ENCODE measurements at regions of chr19 and their contacts with region 1.

Region 1: DNA sequence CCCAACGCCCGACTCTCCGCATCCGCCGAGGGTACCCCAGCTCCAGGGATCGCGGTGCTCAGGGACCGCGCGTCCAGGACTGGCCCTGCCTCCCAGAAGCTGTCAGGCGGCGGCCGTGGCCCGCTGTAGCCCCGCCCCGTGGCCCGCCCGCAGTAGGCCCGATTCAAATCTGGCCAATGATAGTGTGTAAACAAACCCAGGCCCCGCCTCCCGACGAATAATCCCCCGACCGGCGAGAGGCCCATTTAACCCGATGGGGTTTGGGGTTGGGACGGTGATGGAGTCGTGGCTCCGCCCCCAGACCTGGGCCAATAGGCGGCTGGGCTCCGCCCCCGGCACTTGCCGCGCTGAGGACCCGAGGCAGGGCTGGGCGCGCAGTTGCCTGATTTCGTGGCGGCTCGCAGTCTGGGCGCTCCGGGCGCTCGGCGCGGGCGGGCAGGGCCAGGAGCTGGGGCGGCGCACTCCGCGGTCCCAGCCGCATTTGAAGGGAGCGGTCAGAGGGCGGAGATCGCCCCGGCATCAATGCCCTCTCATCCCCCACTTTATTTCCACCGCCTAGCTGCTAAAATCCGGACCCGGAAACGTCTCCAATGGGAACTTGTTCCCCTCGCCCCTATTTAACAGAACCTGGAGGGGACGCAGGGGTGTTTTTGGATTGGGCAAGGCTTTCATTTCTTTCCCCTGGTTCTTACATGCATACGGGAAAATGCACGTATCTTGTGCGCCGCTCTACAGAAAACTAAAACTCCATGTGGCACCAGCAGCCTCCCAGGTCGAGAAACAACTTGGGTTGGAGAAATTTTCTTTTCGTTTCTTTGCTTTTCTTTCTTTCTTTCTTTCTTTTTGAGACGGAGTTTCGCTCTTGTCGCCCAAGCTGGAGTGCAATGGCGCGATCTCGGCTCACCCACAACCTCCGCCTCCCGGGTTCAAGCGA is 8.4 kb upstream of the BICRA start:
- DNase-seq: peak; percentile 96 to 99 (median 98)
- H3K4me3 ChIP-seq: peak overlapping the region; percentile 49 to 67
- H3K4me3 Mint-ChIP-seq: peak overlapping the region; percentile 85 to 90 (median 86)
- H3K27ac ChIP-seq: peak overlapping the region; percentile 74
- H3K27ac Mint-ChIP-seq: peak overlapping the region; percentile 80 to 94 (median 90)
- H3K4me1 ChIP-seq: peaks cover 19% of the 10 kb centered on the region
- H3K4me1 Mint-ChIP-seq: peaks cover 6 to 40% (median 20%) of the 10 kb centered on the region in 4 donors
- H3K27me3 ChIP-seq: no peaks in the 10 kb centered on the region
- H3K27me3 Mint-ChIP-seq: no peaks in the 10 kb centered on the region

Region 2: DNA sequence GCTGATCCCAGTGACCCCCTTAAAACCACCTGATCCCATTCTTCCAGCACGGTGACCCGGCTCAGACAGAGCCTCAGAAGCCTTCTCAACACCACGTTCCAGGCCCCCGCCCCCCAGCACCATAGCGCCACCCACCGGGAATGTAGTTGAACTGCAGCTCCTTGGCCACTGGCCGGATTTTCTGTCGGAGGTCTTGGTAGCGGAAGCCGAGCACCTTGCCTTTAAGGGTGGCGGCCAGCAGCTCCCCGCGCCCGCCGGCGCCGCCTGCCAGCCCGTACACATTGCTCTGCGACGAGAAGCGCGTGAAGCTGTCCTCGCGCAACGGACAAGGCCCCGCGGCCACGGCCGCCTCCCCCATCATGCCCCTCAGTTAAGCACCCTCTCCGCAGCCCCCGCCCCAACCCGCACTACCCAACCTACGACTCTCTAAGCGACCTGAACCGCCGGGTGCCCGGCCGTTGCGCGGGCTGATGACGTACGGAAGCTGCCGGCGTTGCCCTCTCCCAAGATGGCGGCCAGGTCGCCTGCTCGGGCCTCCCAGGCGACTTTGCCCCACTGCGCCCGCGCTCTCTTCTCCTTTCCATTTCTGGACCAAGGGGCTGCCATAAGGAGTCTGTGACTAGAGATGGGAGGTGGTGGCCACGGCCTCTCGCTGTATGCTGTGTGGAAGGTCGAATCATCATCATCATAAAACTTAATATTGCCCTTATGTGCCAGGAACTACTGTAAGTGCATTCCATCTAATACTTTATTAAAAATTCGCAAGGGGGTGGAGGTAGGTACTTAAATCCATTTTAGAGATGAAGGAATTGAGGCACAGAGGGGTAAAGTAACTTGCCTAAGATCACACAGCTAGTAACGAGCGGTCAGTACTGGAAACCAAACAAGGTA is 116.5 kb before region 1 on chr19 and contains the start of gene KPTN:
- CTCF ChIA-PET with region 1: no interaction called
- POLR2A ChIA-PET with region 1: interaction called, 10 read pairs
- intact Hi-C with region 1: loop called (anchors 1 kb)
- DNase-seq: peak; percentile 87 to 92 (median 90)
- H3K4me3 ChIP-seq: peak within 1 kb of the TSS; percentile 44 to 72
- H3K4me3 Mint-ChIP-seq: peak within 1 kb of the TSS; percentile 91 to 100 (median 98)
- H3K27ac ChIP-seq: peak within 1 kb of the TSS; percentile 86
- H3K27ac Mint-ChIP-seq: peak within 1 kb of the TSS; percentile 96 to 100 (median 99)
- H3K4me1 ChIP-seq: peaks cover 21% of the 10 kb centered on the region
- H3K4me1 Mint-ChIP-seq: peaks cover 16 to 42% (median 22%) of the 10 kb centered on the region in 4 donors
- H3K27me3 ChIP-seq: no peaks in the 10 kb centered on the region
- H3K27me3 Mint-ChIP-seq: no peaks in the 10 kb centered on the region
- total RNA-seq, gene KPTN: 4.0 to 4.3 TPM

Region 3: DNA sequence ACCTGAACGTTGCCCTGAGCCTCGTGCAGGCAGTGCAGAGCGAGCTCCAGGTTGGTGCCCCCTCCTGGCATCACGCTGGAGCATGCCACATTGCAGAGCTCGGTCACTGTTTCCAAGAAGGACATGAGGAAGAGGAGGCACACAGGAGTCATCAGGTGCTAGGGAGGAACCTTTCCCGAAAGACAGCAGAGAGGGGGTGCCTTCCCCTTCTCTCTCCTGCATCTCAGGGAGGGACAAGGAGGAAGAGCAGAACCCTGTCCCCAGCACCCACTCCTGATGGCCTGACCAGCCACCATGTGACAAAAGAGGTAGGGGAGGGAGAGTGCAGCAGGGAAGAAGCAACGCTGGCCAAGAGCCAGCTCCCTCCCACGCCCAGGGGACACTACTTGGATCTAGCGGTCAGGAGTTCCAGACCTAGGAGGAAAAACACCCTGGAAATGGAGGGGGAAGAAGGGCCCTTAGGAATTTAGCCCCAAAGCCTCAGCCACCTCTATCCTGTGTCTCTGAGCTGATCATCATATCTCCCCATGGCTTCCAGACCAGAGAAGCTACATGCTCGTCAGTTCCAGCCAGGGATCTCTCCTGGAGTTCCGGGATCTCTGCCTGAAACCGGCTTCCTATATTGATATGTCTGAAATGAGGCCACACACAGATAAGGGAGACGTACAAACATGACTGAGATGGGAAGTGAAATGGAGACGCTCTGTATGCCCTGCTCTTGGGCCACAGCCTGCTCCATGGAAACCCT is 68.7 kb before region 1 on chr19:
- CTCF ChIA-PET with region 1: no interaction called
- POLR2A ChIA-PET with region 1: no interaction called
- intact Hi-C with region 1: no loop called
- DNase-seq: no peak
- H3K4me3 ChIP-seq: no peak overlapping the region
- H3K4me3 Mint-ChIP-seq: no peak overlapping the region
- H3K27ac ChIP-seq: no peak overlapping the region
- H3K27ac Mint-ChIP-seq: no peak overlapping the region
- H3K4me1 ChIP-seq: no peaks in the 10 kb centered on the region
- H3K4me1 Mint-ChIP-seq: peaks cover 0 to 4% (median 0%) of the 10 kb centered on the region in 4 donors
- H3K27me3 ChIP-seq: no peaks in the 10 kb centered on the region
- H3K27me3 Mint-ChIP-seq: no peaks in the 10 kb centered on the region

Region 4: GRCh38 chr19:47573071-47574026 is 27.2 kb before region 1 on chr19 and contains the start of gene ZNF541:
- CTCF ChIA-PET with region 1: interaction called, 9 read pairs
- POLR2A ChIA-PET with region 1: interaction called, 36 read pairs
- intact Hi-C with region 1: loop called (anchors 1 kb)
- DNase-seq: peak; percentile 87 to 90 (median 88)
- H3K4me3 ChIP-seq: peak within 1 kb of the TSS in 1 of 2 donors; percentile 46
- H3K4me3 Mint-ChIP-seq: peak within 1 kb of the TSS; percentile 59 to 79 (median 70)
- H3K27ac ChIP-seq: no peak within 1 kb of the TSS
- H3K27ac Mint-ChIP-seq: peak within 1 kb of the TSS; percentile 37 to 87 (median 70)
- H3K4me1 ChIP-seq: peaks cover 27% of the 10 kb centered on the region
- H3K4me1 Mint-ChIP-seq: peaks cover 25 to 45% (median 34%) of the 10 kb centered on the region in 4 donors
- H3K27me3 ChIP-seq: no peaks in the 10 kb centered on the region
- H3K27me3 Mint-ChIP-seq: no peaks in the 10 kb centered on the region
- total RNA-seq, gene ZNF541: 0.53 to 0.79 TPM

Region 5: DNA sequence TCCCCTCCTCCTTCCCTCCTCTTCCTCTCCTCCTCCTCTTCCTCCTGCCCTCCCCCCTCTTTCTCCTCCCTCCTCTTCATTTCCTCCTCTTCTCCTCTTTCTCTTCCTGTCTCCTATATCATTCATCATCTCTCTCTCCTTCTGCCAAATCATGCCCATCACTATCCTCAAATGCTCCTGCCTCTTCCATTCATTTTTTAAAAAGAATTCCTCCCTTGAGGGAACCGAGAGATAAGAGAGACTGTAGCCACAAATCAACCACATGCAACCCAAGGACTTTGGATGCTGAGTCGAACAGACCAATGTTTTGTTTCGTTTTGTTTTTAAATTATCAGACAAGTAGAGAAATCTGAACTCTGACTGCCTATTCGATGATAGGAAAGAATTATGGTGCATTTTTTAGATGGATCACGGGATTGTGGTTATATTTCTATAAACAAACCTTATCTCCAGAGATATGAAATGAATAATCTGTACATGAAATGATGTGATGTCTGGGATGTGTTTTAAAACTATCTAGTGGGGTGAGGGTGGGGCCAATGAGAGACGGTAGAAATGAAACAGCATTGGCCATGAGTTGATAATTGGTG is 18.1 kb before region 1 on chr19:
- CTCF ChIA-PET with region 1: interaction called, 9 read pairs
- POLR2A ChIA-PET with region 1: interaction called, 36 read pairs
- intact Hi-C with region 1: no loop called
- DNase-seq: peak in 1 of 5 donors; percentile 28
- H3K4me3 ChIP-seq: no peak overlapping the region
- H3K4me3 Mint-ChIP-seq: peak overlapping the region; percentile 9 to 85 (median 73)
- H3K27ac ChIP-seq: no peak overlapping the region
- H3K27ac Mint-ChIP-seq: peak overlapping the region; percentile 56 to 95 (median 79)
- H3K4me1 ChIP-seq: peaks cover 39% of the 10 kb centered on the region
- H3K4me1 Mint-ChIP-seq: peaks cover 21 to 54% (median 33%) of the 10 kb centered on the region in 4 donors
- H3K27me3 ChIP-seq: no peaks in the 10 kb centered on the region
- H3K27me3 Mint-ChIP-seq: no peaks in the 10 kb centered on the region

Region 6: DNA sequence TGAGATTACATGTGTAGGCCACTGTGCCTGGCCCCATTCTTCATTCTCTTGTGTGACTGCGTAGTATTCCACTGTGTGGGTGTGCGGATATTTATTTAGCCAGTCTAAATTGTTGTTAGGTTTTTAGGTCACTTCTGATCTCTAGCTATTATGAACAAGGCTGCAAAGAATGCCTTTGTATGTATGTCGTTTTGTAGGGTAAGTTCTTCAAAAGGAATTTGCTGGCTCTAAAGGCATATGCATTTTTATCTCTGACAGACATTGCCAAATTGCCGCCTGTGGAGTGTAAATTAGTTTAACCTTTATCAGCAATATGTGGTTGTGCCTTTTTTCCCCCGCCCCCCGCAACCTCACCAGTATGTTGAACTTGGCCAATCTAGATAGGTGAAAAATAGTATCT is 82.4 kb after region 1 on chr19:
- CTCF ChIA-PET with region 1: no interaction called
- POLR2A ChIA-PET with region 1: no interaction called
- intact Hi-C with region 1: no loop called
- DNase-seq: no peak
- H3K4me3 ChIP-seq: no peak overlapping the region
- H3K4me3 Mint-ChIP-seq: no peak overlapping the region
- H3K27ac ChIP-seq: no peak overlapping the region
- H3K27ac Mint-ChIP-seq: no peak overlapping the region
- H3K4me1 ChIP-seq: no peaks in the 10 kb centered on the region
- H3K4me1 Mint-ChIP-seq: peaks cover 2 to 9% (median 5%) of the 10 kb centered on the region in 4 donors
- H3K27me3 ChIP-seq: no peaks in the 10 kb centered on the region
- H3K27me3 Mint-ChIP-seq: no peaks in the 10 kb centered on the region

Region 7: DNA sequence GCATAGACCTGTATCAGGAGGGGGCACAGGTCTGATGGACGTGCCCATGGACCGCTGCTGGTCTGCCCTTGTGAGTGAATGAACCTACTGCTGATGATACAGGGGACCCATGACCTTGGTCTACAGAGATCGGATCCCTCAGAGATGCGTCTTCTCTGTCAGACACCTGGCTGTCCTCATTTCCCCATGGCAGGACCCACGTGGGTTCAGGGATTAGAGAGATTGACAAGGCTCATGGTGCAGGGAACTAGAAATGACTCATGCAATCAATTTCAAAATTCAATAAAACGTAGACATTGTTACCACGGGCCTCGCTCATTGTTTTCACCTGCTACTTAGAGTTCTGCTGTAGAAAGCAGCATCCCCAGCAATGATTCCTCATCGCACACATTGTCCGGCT is 204.8 kb after region 1 on chr19:
- CTCF ChIA-PET with region 1: no interaction called
- POLR2A ChIA-PET with region 1: no interaction called
- intact Hi-C with region 1: no loop called
- DNase-seq: no peak
- H3K4me3 ChIP-seq: no peak overlapping the region
- H3K4me3 Mint-ChIP-seq: no peak overlapping the region
- H3K27ac ChIP-seq: no peak overlapping the region
- H3K27ac Mint-ChIP-seq: peak overlapping the region in 1 of 7 donors; percentile 59
- H3K4me1 ChIP-seq: no peaks in the 10 kb centered on the region
- H3K4me1 Mint-ChIP-seq: no peaks in the 10 kb centered on the region
- H3K27me3 ChIP-seq: no peaks in the 10 kb centered on the region
- H3K27me3 Mint-ChIP-seq: peaks cover 1% of the 10 kb centered on the region in 2 donors